CD8-positive, alpha-beta T cell (primary cell): ENCODE measurements at regions of chr11 and their contacts with region 1.

Region 1: DNA sequence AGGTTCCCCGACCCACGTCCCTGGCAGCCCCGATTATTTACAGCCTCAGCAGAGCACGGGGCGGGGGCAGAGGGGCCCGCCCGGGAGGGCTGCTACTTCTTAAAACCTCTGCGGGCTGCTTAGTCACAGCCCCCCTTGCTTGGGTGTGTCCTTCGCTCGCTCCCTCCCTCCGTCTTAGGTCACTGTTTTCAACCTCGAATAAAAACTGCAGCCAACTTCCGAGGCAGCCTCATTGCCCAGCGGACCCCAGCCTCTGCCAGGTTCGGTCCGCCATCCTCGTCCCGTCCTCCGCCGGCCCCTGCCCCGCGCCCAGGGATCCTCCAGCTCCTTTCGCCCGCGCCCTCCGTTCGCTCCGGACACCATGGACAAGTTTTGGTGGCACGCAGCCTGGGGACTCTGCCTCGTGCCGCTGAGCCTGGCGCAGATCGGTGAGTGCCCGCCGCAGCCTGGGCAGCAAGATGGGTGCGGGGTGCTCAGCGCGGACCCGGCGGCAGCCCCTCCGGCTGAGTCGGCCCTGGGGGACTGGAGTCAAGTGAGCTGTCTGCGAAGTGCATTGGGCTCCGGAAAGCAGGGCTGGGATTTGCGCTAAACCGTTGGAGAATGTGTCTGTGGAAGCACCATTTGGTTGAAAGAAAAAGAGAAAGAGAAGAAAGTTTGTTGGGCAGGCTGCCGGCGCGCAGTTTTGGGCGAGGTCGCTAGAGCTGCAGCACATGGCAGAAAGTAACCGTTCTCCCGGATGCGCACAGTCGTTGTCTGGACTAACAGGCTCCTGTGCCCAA is at the start of gene CD44:
- DNase-seq: peak; percentile 67 to 93 (median 85)
- ATAC-seq: peak; percentile 83
- H3K4me3 ChIP-seq: peak within 1 kb of the TSS; percentile 80 to 97
- H3K4me3 Mint-ChIP-seq: peak within 1 kb of the TSS; percentile 90
- H3K27ac ChIP-seq: peak within 1 kb of the TSS; percentile 82 to 98
- H3K27ac Mint-ChIP-seq: peak within 1 kb of the TSS; percentile 98
- H3K4me1 ChIP-seq: peaks cover 35% of the 10 kb centered on the region
- H3K4me1 Mint-ChIP-seq: peaks cover 47% of the 10 kb centered on the region
- H3K27me3 ChIP-seq: no peaks in the 10 kb centered on the region
- H3K27me3 Mint-ChIP-seq: no peaks in the 10 kb centered on the region
- CTCF ChIP-seq: no peak
- total RNA-seq, gene CD44: 1,070 to 1,104 TPM

Region 2: GRCh38 chr11:35040221-35040942 is 98.8 kb before region 1 on chr11:
- CTCF ChIA-PET with region 1: interaction called, 5 read pairs
- POLR2A ChIA-PET with region 1: interaction called, 6 read pairs
- intact Hi-C with region 1: loop called (anchors 1 to 2 kb)
- DNase-seq: peak in 8 of 9 experiments; percentile 16 to 87 (median 55)
- ATAC-seq: peak; percentile 77
- H3K4me3 ChIP-seq: peak overlapping the region in 1 of 2 experiments; percentile 46
- H3K4me3 Mint-ChIP-seq: peak overlapping the region; percentile 79
- H3K27ac ChIP-seq: peak overlapping the region; percentile 36 to 83
- H3K27ac Mint-ChIP-seq: peak overlapping the region; percentile 97
- H3K4me1 ChIP-seq: peaks cover 25% of the 10 kb centered on the region
- H3K4me1 Mint-ChIP-seq: peaks cover 35% of the 10 kb centered on the region
- H3K27me3 ChIP-seq: no peaks in the 10 kb centered on the region
- H3K27me3 Mint-ChIP-seq: no peaks in the 10 kb centered on the region
- CTCF ChIP-seq: no peak

Region 3: DNA sequence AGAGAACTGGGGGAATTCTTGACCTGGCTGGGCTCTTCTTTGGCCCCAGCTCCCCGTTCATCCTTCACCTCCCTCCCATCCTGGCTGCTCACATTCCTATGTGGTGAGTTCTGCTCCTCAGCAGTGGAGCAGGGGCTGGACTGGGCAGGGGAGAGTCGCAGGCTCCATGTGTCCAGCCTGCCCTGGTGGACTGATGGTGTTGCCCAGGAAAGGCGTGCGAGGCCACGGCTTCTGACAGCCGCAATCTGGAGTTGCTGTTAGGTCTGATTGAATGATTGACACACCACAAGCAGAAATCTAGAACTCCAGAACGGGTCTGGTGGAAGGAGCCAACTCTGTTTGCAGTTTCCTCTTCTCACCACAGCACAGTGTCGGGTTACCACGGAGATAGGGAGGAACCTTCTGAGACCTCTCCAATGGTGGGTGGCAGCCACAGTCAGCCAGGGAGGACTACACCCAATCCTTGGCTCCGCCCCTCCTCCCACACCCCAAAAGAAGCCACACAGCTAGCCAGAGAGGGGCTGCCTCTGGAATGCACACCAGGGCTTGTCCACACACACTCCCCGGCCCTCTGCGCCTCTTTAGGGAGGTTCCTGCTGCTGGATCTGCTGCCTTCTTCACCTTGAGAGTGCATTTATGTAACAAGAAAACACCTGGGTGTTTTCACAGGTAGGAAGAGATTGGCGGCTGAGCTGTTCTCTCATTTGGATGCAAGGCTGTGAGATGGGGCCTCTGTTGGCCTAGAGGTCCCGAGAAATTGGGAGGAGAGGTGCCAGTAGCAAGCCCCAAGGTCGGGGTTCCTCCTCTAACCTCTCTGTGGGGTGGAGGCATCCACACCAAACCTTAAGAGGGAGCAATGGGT is 56.6 kb before region 1 on chr11:
- CTCF ChIA-PET with region 1: no interaction called
- POLR2A ChIA-PET with region 1: interaction called, 8 read pairs
- intact Hi-C with region 1: loop called (anchors 1 to 2 kb)
- DNase-seq: peak; percentile 70 to 95 (median 84)
- ATAC-seq: peak; percentile 79
- H3K4me3 ChIP-seq: peak overlapping the region; percentile 12 to 40
- H3K4me3 Mint-ChIP-seq: peak overlapping the region; percentile 73
- H3K27ac ChIP-seq: peak overlapping the region; percentile 73 to 86
- H3K27ac Mint-ChIP-seq: peak overlapping the region; percentile 98
- H3K4me1 ChIP-seq: peaks cover 69% of the 10 kb centered on the region
- H3K4me1 Mint-ChIP-seq: peaks cover 83% of the 10 kb centered on the region
- H3K27me3 ChIP-seq: no peaks in the 10 kb centered on the region
- H3K27me3 Mint-ChIP-seq: no peaks in the 10 kb centered on the region
- CTCF ChIP-seq: no peak

Region 4: DNA sequence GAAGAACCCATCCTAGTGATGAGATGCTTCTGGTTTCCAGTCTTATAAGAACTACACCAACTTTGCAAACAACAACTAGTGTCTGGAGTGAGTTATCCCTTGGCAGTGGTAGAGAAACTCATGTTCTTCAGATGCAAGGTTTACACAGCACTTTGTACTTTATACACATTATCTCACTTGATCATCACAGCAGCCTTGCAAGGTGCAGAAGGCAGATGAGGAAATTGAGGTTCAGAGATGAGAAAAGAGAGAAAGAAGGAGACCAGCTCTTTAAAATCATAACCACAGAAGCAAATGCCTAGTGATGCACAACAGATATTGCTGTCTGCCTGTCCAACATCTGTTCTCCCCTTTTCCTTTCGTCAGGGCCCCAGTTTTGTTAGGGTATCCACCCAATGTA is 16.8 kb before region 1 on chr11:
- CTCF ChIA-PET with region 1: interaction called, 6 read pairs
- POLR2A ChIA-PET with region 1: interaction called, 3 read pairs
- intact Hi-C with region 1: loop called in 1 of 2 experiments (anchors 2 kb)
- DNase-seq: peak in 2 of 9 experiments; percentile 46 to 65
- ATAC-seq: peak; percentile 73
- H3K4me3 ChIP-seq: no peak overlapping the region
- H3K4me3 Mint-ChIP-seq: peak overlapping the region; percentile 3
- H3K27ac ChIP-seq: peak overlapping the region in 1 of 2 experiments; percentile 24
- H3K27ac Mint-ChIP-seq: peak overlapping the region; percentile 29
- H3K4me1 ChIP-seq: peaks cover 33% of the 10 kb centered on the region
- H3K4me1 Mint-ChIP-seq: peaks cover 53% of the 10 kb centered on the region
- H3K27me3 ChIP-seq: no peaks in the 10 kb centered on the region
- H3K27me3 Mint-ChIP-seq: no peaks in the 10 kb centered on the region
- CTCF ChIP-seq: no peak

Region 5: DNA sequence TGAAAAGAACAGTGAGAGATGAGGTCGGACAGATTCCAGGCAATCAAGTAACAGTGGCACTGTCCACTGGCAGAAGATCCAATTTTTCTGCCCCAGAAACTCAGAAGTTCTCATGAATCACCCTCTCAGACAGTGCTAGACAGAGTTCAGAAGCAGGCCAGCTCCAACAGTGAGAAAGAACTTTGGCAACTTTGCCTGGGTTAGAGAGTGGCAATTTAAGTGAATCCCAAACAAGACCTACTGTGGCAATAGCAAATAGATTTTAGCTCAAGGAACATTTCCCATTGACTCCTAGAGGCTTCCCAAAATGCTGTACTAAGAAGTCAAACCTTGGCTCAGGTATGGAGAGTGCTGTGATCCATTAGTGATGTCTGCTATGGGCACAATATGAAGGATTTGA is 12.1 kb after region 1 on chr11:
- CTCF ChIA-PET with region 1: interaction called, 8 read pairs
- POLR2A ChIA-PET with region 1: interaction called, 21 read pairs
- intact Hi-C with region 1: no loop called
- DNase-seq: peak in 1 of 9 experiments; percentile 34
- ATAC-seq: no peak
- H3K4me3 ChIP-seq: no peak overlapping the region
- H3K4me3 Mint-ChIP-seq: peak overlapping the region; percentile 48
- H3K27ac ChIP-seq: peak overlapping the region in 1 of 2 experiments; percentile 52
- H3K27ac Mint-ChIP-seq: peak overlapping the region; percentile 87
- H3K4me1 ChIP-seq: peaks cover 100% of the 10 kb centered on the region
- H3K4me1 Mint-ChIP-seq: peaks cover 96% of the 10 kb centered on the region
- H3K27me3 ChIP-seq: no peaks in the 10 kb centered on the region
- H3K27me3 Mint-ChIP-seq: no peaks in the 10 kb centered on the region
- CTCF ChIP-seq: no peak

Region 6: GRCh38 chr11:35182317-35182939 is 43.3 kb after region 1 on chr11:
- CTCF ChIA-PET with region 1: interaction called, 7 read pairs
- POLR2A ChIA-PET with region 1: interaction called, 42 read pairs
- intact Hi-C with region 1: loop called in 1 of 2 experiments (anchors 1 kb)
- DNase-seq: peak in 1 of 9 experiments; percentile 24
- ATAC-seq: no peak
- H3K4me3 ChIP-seq: no peak overlapping the region
- H3K4me3 Mint-ChIP-seq: peak overlapping the region; percentile 24
- H3K27ac ChIP-seq: peak overlapping the region in 1 of 2 experiments; percentile 9
- H3K27ac Mint-ChIP-seq: peak overlapping the region; percentile 89
- H3K4me1 ChIP-seq: peaks cover 80% of the 10 kb centered on the region
- H3K4me1 Mint-ChIP-seq: peaks cover 86% of the 10 kb centered on the region
- H3K27me3 ChIP-seq: no peaks in the 10 kb centered on the region
- H3K27me3 Mint-ChIP-seq: no peaks in the 10 kb centered on the region
- CTCF ChIP-seq: no peak

Region 7: DNA sequence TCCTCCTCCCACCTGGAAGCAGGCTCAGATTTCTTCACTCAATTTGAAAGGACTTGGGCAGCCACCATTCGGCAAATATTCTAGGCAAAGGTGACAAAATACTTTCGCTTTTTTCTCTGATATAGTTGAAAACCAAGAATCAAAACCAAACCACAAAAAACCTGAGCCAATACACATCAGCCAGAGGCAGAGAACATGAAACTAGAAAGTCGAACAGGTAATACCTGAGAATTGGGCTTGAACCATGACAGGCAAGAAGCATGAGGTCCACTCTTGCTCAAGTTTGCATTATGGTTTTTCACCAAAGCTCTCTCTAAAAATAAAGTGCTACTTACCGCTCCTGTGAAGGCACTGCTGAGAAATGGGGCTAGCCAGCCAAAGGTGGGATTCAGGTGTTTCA is 778.5 kb after region 1 on chr11:
- CTCF ChIA-PET with region 1: no interaction called
- POLR2A ChIA-PET with region 1: no interaction called
- intact Hi-C with region 1: no loop called
- DNase-seq: no peak
- ATAC-seq: no peak
- H3K4me3 ChIP-seq: no peak overlapping the region
- H3K4me3 Mint-ChIP-seq: no peak overlapping the region
- H3K27ac ChIP-seq: no peak overlapping the region
- H3K27ac Mint-ChIP-seq: no peak overlapping the region
- H3K4me1 ChIP-seq: no peaks in the 10 kb centered on the region
- H3K4me1 Mint-ChIP-seq: no peaks in the 10 kb centered on the region
- H3K27me3 ChIP-seq: no peaks in the 10 kb centered on the region
- H3K27me3 Mint-ChIP-seq: peaks cover 21% of the 10 kb centered on the region
- CTCF ChIP-seq: no peak

Region 8: GRCh38 chr11:36746886-36747710 is 1608.0 kb after region 1 on chr11:
- CTCF ChIA-PET with region 1: no interaction called
- POLR2A ChIA-PET with region 1: no interaction called
- intact Hi-C with region 1: loop called in 1 of 2 experiments (anchors 10 kb)
- DNase-seq: peak; percentile 62 to 91 (median 77)
- ATAC-seq: peak; percentile 100
- H3K4me3 ChIP-seq: no peak overlapping the region
- H3K4me3 Mint-ChIP-seq: no peak overlapping the region
- H3K27ac ChIP-seq: no peak overlapping the region
- H3K27ac Mint-ChIP-seq: no peak overlapping the region
- H3K4me1 ChIP-seq: no peaks in the 10 kb centered on the region
- H3K4me1 Mint-ChIP-seq: peaks cover 5% of the 10 kb centered on the region
- H3K27me3 ChIP-seq: no peaks in the 10 kb centered on the region
- H3K27me3 Mint-ChIP-seq: peaks cover 27% of the 10 kb centered on the region
- CTCF ChIP-seq: peak; percentile 91